BJ (cell line): ENCODE measurements at regions of chr20 and their contacts with region 1.

Region 1: DNA sequence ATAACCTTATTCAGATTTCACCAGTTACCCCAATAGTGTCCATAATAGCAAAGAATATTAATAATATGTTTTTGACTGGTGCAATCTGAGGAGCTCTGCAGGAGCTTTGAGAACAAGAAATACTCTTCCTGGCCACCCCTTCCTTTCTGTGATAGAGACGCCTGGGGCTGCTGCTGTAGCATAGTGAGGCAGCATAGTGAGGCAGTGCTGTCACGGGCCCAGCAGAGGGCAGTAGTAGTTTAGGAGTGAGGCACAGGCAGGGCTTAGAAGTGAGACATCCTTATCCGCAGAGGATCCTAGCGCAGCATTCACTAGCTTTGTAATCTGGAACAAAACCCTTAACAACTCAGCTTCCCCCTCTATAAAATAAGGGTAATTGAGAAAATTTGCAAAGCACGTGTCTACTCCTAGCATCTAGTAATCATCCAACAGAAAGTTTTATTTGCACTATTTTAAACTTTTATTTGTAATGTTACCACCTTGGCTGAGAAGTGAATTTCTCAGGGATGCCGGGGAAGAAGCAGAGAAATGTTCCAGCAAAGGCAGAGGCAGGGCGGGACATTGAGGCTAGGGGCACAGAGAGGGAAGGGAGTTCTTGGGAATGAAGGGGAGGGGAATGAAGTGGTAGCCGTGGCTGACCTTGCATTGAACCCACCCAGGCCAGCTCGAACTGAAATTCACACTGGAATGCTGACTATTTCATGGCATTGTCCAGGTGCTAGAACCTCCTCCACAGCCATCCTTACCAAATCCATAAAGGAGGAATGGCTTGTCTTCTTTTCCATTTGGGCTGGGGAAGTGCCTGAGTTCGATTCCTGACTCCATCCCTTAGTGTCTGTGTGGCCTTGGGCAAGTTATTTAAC is 78.8 kb downstream of the CDS2 start:
- DNase-seq: peak; percentile 25
- H3K4me3 ChIP-seq: no peak overlapping the region
- H3K27me3 ChIP-seq: no peaks in the 10 kb centered on the region
- CTCF ChIP-seq: peak; percentile 95

Region 2: DNA sequence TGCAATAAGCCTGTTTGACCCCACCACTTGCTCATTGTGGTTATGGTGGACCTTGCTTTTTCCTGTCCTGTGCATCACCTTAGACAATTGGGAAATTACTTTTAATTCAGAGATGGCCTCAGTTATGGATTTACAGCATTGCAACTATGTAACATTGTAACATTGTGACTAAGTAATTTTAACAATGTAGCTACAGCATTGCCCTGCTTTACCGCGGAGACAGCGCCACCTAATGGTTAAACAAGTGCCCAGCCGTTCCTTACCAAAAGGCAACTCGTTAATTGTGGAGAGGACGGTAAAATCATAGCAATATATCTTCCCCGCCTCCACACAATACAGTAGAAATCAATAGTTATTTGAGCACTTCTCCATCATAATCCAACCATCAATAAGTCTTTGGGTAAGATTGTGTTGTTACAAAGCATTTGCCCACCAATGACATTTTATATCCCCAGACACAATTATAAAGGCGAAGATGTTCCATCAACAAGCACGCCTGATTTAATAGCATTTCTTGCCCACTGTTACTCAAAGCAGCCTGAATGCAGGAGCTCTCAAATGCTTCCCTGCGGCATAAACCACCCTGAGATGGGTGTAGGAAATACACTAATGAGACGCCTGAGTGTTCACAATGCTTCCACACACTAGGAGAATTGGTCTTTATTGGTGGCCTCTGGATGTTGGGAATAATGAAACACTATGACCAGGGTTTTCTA is 17.5 kb after region 1 on chr20:
- CTCF ChIA-PET with region 1: interaction called, 246 read pairs
- POLR2A ChIA-PET with region 1: no interaction called
- DNase-seq: peak; percentile 13
- H3K4me3 ChIP-seq: no peak overlapping the region
- H3K27me3 ChIP-seq: no peaks in the 10 kb centered on the region
- CTCF ChIP-seq: peak; percentile 95

Region 3: GRCh38 chr20:5234158-5234557 is 28.6 kb after region 1 on chr20:
- CTCF ChIA-PET with region 1: interaction called, 13 read pairs
- POLR2A ChIA-PET with region 1: no interaction called
- DNase-seq: no peak
- H3K4me3 ChIP-seq: no peak overlapping the region
- H3K27me3 ChIP-seq: no peaks in the 10 kb centered on the region
- CTCF ChIP-seq: no peak

Region 4: DNA sequence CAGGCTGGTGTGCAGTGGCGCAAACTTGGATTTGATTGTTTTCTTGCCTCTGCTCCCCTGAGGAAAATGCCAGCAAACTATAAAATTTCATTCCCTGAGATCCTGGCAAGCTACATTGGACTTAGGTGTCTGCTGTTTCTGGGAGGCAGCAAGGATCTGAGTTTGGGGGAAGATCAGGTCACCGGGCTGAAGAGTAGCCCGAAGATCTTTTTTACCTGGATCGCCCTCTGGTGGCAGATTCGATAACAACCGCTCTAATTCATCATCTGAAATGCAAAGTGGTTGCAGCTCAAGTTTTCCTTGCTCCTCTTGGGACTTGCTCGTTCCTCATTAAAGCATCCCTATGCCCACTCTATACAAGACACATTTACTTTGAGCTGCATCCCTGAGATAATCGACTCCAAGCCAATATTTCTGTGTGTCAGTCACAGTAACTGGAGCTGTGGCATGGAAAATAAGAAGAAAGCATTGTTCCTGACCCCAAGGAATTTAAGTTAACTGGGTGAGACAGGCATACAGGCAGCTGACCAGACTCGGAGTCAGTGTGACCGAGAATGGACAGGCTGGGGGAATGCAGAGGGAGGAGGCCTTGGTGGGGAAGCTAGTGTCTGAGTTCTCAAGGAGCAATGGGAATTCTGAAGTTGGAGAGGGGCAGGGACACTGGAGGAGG is 243.0 kb after region 1 on chr20:
- CTCF ChIA-PET with region 1: interaction called, 76 read pairs
- POLR2A ChIA-PET with region 1: no interaction called
- DNase-seq: no peak
- H3K4me3 ChIP-seq: no peak overlapping the region
- H3K27me3 ChIP-seq: no peaks in the 10 kb centered on the region
- CTCF ChIP-seq: peak; percentile 81